Mammary epithelial cell (primary cell): ENCODE measurements at regions of chr3 and their contacts with region 1.

Region 1: DNA sequence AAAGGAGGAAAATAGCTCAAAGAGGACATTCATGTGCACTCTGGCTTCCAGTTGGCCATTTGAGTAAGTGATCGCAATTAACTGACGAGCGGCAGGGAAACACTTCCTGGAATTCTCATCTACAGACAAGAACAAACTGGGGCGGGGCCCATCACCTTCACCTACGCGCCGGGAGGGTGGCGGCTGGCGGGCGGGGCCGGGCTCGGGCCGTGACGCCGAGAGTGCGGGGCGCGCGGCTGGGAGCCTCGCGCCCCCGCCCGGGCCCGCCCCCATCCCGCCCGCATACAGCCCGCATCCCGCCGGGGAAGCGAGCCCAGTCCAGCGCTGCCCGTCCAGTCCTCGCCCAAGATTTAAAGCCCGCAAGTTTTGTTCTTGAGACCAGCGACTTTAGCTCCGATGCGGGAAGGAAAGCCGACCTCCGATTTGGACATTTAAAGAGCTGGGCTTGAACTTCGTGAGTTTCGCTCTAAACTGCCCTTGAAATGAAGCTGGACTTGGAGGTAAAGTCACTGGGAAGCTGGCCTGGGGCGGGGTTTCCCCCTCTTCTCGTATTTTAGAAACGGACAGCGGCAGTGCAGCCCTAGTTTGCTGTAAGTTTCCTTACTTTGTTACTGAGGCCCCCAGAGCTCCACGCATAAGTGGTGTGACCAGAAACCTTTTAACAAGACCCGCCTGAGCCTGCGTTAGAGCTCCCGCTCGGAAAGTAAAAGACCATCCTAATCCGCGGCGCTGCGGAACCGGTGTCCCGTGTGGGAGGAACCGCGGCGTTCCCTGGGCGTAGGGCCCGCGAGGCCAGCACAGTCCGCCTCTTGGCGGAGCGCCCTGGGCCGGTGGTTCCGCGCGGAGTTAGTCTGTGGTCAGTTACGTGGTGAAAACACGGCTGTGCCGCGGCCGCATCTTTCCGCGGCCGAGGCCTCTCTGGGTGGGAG is at the start of gene B3GNT5:
- DNase-seq: peak; percentile 87
- H3K4me3 ChIP-seq: peak within 1 kb of the TSS; percentile 72 to 98 (median 96)
- H3K27ac ChIP-seq: peak within 1 kb of the TSS; percentile 99
- H3K4me1 ChIP-seq: peaks cover 14% of the 10 kb centered on the region
- H3K27me3 ChIP-seq: no peaks in the 10 kb centered on the region
- CTCF ChIP-seq: no peak
- total RNA-seq, gene B3GNT5: 9.3 to 54.1 TPM

Region 2: GRCh38 chr3:183178629-183179549 is 74.3 kb before region 1 on chr3:
- CTCF ChIA-PET with region 1: no interaction called
- dilution Hi-C with region 1: no loop called
- in situ Hi-C with region 1: no loop called
- intact Hi-C with region 1: loop called (anchors 1 kb)
- DNase-seq: peak; percentile 46
- H3K4me3 ChIP-seq: peak overlapping the region; percentile 55 to 62 (median 60)
- H3K27ac ChIP-seq: no peak overlapping the region
- H3K4me1 ChIP-seq: peaks cover 4% of the 10 kb centered on the region
- H3K27me3 ChIP-seq: no peaks in the 10 kb centered on the region
- CTCF ChIP-seq: peak in 1 of 2 donors; percentile 26

Region 3: DNA sequence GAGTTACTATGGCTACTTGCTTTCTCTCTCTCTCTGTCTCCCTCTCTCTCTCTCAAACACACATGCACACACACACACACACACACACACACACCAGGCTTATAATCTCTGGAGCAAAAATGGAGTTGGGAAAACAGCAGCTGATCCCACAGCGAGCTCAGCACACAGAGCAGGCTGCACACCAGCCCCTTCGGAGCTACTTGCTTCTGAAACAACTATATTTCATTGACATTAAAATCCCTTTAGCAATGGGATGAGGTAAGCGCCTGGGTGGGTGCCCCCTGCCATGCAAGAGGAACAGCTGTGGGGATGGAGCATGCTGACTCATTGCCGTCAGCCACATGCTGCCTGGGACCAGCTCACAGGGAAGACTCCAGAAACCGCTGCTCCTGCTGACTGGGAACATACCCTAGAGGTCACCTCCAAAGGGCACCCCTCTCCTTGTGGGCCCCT is 45.5 kb after region 1 on chr3:
- CTCF ChIA-PET with region 1: no interaction called
- dilution Hi-C with region 1: loop called (anchors 5 kb)
- in situ Hi-C with region 1: no loop called
- intact Hi-C with region 1: no loop called
- DNase-seq: no peak
- H3K4me3 ChIP-seq: no peak overlapping the region
- H3K27ac ChIP-seq: no peak overlapping the region
- H3K4me1 ChIP-seq: peaks cover 42% of the 10 kb centered on the region
- H3K27me3 ChIP-seq: no peaks in the 10 kb centered on the region
- CTCF ChIP-seq: no peak

Region 4: DNA sequence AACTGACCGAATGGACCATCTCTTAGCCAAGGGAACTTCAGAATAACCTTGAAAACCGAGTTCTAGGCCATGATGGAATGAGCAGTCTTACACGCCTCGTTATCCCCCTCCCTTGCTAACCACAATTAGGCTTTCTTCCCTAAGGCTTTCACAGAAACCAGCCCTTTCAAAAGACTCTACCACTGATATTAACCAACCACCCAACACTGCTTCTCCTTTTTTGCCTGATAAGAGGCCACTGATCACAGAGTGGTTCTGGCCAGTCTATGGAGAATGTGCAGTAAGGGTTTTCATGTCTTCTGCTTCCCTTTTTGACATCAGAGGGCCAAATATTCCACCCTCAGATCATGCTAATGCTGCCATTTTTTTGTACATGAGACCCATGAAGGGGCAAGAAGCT is 115.9 kb after region 1 on chr3:
- CTCF ChIA-PET with region 1: interaction called, 3 read pairs
- dilution Hi-C with region 1: no loop called
- in situ Hi-C with region 1: no loop called
- intact Hi-C with region 1: loop called (anchors 1 kb)
- DNase-seq: no peak
- H3K4me3 ChIP-seq: no peak overlapping the region
- H3K27ac ChIP-seq: peak overlapping the region; percentile 95
- H3K4me1 ChIP-seq: peaks cover 28% of the 10 kb centered on the region
- H3K27me3 ChIP-seq: no peaks in the 10 kb centered on the region
- CTCF ChIP-seq: no peak

Region 5: DNA sequence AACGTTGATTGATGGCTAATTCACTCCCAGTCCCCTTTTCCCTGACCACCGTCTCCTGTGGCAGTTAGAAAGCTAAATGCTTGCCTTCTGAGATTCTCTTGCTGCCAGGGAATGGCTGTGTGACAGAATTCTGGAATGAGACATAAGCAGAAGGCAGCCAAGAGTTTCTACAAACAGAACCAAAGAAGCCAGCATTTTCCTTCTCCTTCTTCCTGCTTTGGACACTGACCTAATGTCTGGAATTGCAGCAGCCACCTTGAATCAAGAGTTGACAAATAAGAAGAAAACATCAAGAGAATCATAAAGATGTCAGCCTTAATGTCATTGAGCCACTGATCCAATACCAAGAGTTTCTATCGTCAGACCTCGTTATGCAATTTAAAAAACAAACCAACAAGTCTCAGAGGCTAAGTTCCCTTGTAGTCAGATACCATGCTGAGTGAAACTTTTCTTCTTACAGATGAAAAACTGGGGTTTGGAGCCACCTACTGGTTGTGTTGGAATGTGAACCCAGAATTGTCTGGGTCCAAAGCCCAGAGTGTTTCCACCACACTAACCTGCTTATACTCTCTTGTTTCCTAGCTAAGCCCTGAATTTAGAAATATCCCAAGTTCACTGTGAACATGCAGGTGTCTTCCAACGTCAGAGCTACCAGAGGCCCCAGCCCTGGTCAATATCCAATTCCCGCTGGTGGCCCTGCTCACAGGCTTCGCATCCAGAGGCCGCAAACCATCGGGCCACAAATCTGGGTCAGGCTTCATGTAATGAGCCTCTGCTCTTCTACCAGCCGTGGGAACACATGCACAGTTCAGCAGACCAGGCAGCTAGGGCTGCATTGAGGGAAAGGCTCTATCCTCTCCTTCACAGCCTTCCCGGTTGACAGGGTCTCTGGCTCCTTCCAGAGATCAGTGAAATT is 132.7 kb after region 1 on chr3:
- CTCF ChIA-PET with region 1: interaction called, 6 read pairs
- dilution Hi-C with region 1: no loop called
- in situ Hi-C with region 1: loop called in 1 of 2 experiments (anchors 10 kb)
- intact Hi-C with region 1: loop called (anchors 1 kb)
- DNase-seq: peak; percentile 59
- H3K4me3 ChIP-seq: no peak overlapping the region
- H3K27ac ChIP-seq: no peak overlapping the region
- H3K4me1 ChIP-seq: peaks cover 8% of the 10 kb centered on the region
- H3K27me3 ChIP-seq: no peaks in the 10 kb centered on the region
- CTCF ChIP-seq: peak; percentile 72 to 80